ENCODE measurements at regions of chr11 and their contacts with region 1.

Region 1: DNA sequence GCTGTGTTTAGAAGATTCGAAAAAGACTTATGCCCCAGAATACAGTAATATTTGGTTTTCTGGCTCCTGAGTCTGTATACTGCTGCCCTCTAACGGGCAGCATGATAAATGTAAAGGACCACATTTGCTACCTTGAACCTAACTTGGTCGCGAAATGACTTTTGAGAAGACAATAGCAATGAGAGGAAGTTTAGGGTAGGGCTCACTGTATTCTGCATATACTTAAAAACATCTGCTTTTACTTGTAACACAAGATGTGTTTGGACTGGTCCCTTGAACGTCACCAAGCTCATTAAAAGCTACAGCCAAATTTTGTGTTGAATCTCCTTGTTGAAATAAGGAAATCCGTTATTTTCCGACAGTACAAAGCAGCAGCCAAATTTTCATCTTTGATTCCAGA is 309.1 kb downstream of the SWAP70 start:
- DNase-seq: peak; percentile 55 to 74 (median 73)
- H3K4me3 ChIP-seq: no peak overlapping the region
- H3K27ac ChIP-seq: no peak overlapping the region
- H3K4me1 ChIP-seq: peaks cover 0 to 10% (median 8%) of the 10 kb centered on the region in 4 experiments
- H3K27me3 ChIP-seq: no peaks in the 10 kb centered on the region

Region 2: GRCh38 chr11:9757809-9758636 is 215.0 kb before region 1 on chr11:
- CTCF ChIA-PET with region 1: interaction called, 16 read pairs
- POLR2A ChIA-PET with region 1: no interaction called
- DNase-seq: peak; percentile 87 to 95 (median 95)
- H3K4me3 ChIP-seq: peak overlapping the region; percentile 55 to 86 (median 75)
- H3K27ac ChIP-seq: peak overlapping the region; percentile 59 to 61
- H3K4me1 ChIP-seq: peaks cover 12 to 64% (median 48%) of the 10 kb centered on the region in 4 experiments
- H3K27me3 ChIP-seq: no peaks in the 10 kb centered on the region

Region 3: DNA sequence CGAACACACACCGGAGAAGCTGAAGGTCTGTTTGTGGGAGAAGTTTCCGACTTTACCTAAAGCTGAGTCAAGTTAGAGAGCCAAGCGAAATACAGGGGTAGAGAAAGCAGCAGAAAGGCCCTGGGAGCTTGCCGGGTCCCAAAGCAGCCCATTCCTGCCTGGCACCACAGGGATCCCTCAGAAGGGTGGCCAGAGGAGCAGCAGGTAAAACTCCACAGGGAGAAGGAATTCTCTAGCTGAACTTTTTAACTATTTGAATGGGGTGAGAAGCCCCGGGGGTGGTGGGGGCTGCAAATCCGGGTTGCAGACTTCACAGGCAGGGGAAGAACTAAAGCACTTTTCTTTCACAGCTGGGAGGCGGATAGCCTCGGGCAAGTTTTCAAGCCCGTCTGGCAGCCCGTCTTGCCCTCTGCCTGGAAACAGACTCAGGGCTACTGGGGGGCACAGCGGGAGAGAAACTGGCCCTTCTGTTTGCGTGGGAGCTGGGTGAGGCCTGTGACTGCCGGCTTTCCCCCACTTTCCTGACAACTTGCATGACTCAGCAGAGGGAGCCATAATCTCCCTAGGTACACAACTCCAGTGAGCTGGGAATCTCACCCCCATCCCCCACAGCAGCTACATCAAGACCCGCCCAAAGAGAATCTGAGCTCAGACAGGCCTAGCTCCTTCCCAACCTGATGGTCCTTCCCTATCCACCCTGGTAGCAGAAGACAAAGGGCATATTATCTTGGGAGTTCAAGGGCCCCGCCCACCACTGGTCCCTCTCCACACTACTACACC is 10.0 kb after region 1 on chr11:
- CTCF ChIA-PET with region 1: interaction called, 18 read pairs
- POLR2A ChIA-PET with region 1: no interaction called
- DNase-seq: no peak
- H3K4me3 ChIP-seq: no peak overlapping the region
- H3K27ac ChIP-seq: no peak overlapping the region
- H3K4me1 ChIP-seq: peaks cover 0 to 14% (median 7%) of the 10 kb centered on the region in 4 experiments
- H3K27me3 ChIP-seq: no peaks in the 10 kb centered on the region

Region 4: GRCh38 chr11:10026514-10026913 is 53.5 kb after region 1 on chr11:
- CTCF ChIA-PET with region 1: no interaction called
- POLR2A ChIA-PET with region 1: no interaction called
- DNase-seq: no peak
- H3K4me3 ChIP-seq: no peak overlapping the region
- H3K27ac ChIP-seq: no peak overlapping the region
- H3K4me1 ChIP-seq: peaks cover 2 to 7% (median 5%) of the 10 kb centered on the region in 4 experiments
- H3K27me3 ChIP-seq: no peaks in the 10 kb centered on the region

Region 5: GRCh38 chr11:10356161-10356560 is 383.2 kb after region 1 on chr11:
- CTCF ChIA-PET with region 1: no interaction called
- POLR2A ChIA-PET with region 1: no interaction called
- DNase-seq: no peak
- H3K4me3 ChIP-seq: no peak overlapping the region
- H3K27ac ChIP-seq: no peak overlapping the region
- H3K4me1 ChIP-seq: peaks cover 0 to 10% (median 1%) of the 10 kb centered on the region in 4 experiments
- H3K27me3 ChIP-seq: no peaks in the 10 kb centered on the region

Measured in common myeloid progenitor, CD34-positive (primary cell).